Sciatic nerve (tissue), 2 donors: ENCODE measurements at regions of chr16 and their contacts with region 1.

Region 1: DNA sequence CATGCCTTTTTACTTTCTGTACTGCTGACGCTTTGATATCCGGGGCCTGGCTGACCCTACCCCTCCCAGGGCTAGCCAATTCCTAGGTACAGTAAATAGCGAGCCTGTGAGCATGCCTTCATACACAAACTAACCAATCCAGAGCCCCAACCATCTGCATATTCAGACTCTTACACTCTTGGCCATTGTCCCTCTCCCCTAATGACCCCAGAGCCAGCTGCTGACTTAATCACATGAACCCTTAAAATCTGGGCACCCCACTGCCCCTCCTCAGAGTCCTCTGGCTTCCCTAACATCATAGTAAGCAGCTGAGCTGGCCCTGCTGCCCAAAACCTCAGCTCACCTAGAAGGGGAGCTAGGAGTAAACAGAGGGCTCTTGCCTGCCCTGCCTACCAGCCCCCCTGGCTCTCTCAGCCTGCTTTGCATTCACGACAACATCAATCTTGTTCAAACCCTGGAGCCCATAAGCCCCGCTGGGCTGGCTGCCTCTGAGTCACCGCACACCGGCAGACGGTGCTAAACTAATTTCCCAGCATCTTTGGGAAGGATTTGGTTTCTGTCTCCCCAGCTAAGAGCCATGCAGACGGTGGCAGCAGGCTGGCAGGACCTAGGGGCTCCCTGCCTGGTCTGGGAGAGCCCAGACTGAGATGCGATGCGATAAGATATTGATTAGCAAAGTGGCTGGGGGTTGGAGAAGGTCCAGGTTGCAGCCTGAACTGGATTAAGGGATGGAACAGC is 63.2 kb downstream of the CLEC19A start:
- DNase-seq: no peak
- ATAC-seq: no peak

Region 2: DNA sequence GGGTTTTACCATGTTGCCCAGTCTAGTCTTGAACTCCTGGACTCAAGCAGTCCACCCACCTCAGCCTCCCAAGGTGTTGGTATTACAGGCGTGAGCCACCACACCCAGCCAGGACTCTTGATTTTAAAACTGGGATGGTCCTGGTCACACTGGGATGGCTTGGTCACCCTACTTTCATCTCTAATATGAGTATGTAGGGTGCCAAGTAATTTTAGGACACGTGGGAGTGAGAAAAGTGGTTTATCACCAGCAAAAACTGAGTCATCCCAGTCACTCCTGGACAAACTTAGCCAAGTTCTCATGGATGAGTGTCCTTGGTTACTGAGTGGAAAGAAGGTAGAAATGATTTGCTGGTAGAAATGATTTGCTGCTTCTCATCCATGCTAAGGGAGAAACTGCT is 53.4 kb before region 1 on chr16:
- intact Hi-C with region 1: loop called (anchors 5 kb)
- DNase-seq: no peak
- ATAC-seq: no peak